GM18951 (cell line): ENCODE measurements at regions of chr13 and their contacts with region 1.

Region 1: DNA sequence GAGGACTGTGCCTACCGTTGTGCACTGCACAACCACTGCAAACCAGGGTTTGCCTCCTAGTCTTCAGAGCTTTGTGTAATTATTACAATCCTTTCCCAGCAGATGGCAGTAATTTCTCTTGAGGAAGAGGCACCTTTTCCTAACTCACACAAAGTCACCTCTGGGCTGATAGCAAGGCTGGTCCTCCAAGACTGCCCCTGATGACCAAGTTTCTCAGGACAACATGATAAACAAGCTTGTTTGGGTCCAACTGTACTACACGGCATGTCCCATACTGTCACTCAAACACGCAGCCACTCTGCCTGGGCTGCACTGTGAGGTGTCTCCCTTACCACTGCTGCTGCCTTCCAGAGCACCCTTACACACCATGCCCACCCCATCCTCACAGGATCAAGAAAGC is 39.3 kb downstream of the RFXAP start:
- POLR2A ChIP-seq: no peak

Region 2: DNA sequence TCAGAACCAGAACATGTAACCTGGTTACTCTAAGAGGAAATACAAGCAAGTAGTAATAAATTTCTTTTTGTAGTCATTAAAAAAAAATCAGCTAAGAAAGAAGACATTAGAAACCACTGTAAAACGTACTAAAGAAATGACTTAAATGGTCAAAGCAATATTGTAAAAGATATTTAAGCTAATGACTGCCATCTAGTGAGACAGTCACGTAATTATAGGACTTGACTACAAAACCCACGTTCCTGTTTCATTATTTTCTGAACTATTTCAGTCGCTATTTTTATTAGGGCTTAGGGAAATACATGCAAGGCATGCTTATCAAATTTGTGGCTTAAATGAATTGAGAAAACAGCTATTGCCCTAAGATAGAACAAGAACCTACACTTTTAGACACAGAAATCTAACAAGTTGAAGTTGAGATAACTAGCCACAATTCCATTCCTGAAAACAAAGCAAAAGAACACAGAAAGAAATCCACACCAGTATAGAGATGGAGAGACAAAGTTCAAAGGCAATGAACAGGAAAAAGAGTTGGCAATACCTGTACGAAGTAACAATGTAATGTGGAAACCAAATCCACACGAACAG is 123.0 kb after region 1 on chr13:
- in situ Hi-C with region 1: loop called (anchors 10 kb)
- POLR2A ChIP-seq: no peak